ENCODE measurements at regions of chr16 and their contacts with region 1.

Region 1: DNA sequence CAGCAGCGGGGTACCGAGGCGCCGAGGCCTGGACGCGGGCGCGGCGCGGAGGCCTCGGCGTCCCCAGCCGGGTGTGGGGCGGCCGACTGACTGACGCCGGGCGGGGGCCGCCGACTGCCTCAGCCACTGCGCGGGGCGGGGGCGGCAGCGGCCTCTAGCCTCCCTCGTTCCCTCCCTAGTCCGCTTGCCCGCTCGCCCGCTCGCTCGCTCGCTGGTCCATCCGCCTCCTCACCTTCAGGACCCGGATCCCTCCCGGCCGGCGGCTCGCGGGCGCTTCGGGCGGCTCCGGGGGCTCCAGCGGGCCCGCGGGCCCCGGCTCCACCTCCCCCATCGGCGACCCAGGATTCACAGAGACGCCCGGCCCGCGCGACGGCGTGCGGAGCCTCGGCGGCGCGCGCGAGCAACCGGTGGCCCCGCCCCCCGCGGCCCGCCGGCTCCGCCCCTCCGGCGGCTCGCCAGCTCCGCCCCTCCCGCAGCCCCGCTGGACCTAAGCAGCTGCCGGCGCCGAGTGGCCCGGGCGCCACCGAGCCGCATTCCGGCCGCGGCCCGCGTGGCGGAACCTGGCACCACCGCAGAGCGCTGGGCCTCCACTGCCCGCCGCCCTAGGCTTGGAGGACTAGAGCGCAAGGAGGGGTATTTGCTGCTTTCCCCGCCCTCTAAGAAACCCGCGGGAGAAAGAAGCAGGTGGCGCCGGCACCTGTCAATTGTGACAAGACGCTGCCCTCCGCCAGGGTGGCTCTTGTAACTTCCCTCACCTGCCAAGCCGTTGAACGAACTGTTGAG is 773 bp downstream of the PHLPP2 start:
- DNase-seq: peak; percentile 71
- H3K4me3 Mint-ChIP-seq: peak overlapping the region; percentile 81
- H3K27ac Mint-ChIP-seq: no peak overlapping the region
- H3K4me1 Mint-ChIP-seq: peaks cover 12% of the 10 kb centered on the region
- H3K27me3 Mint-ChIP-seq: peaks cover 9% of the 10 kb centered on the region

Region 2: DNA sequence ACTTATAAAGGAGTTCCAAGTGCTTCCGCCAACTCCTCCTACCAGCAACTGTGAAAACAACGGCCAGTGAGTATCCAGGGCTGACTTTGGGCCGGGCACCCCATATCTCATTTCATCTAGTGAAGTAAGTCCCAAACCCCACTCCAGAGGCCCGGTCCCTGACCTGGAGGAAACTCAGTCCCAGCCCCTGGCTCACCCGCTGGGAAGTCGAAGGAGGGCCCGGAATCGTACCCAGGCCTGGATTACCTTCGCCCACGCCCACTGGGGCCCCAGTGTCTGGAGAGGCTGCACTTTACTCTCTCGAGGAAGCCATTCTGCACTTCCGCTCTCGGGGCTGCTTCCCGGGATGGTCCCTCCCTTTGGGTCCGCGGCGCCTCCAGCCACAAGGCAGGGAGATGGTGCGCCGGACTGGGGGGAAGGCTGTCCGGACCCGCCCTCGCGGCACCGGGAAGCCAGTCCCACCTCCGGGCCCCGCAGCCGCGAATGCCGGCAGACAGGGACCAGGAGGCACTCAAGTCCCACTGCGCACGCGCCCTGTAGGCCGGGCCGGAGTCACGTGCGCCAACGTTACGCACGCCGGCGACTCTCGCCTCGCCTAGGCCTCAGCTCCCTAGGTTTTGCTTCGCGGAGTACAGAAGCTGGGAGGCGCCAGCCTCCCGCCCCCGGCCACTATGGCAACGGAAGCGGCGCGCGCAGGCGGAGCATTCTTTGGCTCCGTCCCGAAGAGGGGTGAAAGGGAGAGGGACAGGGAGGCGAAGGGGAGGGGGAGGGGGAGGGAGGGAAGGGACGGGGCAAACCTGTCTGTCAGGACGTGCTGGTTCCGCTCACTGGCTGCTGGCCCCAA is 434.6 kb before region 1 on chr16 and contains the start of gene CMTR2:
- intact Hi-C with region 1: no loop called
- DNase-seq: peak; percentile 88
- H3K4me3 Mint-ChIP-seq: peak within 1 kb of the TSS; percentile 88
- H3K27ac Mint-ChIP-seq: peak within 1 kb of the TSS; percentile 84
- H3K4me1 Mint-ChIP-seq: peaks cover 19% of the 10 kb centered on the region
- H3K27me3 Mint-ChIP-seq: peaks cover 13% of the 10 kb centered on the region
- total RNA-seq, gene CMTR2: 17.1 and 19.6 TPM in 2 replicates

Region 3: GRCh38 chr16:71564155-71564967 is 159.4 kb before region 1 on chr16:
- intact Hi-C with region 1: loop called (anchors 1 kb)
- DNase-seq: no peak
- H3K4me3 Mint-ChIP-seq: peak overlapping the region; percentile 89
- H3K27ac Mint-ChIP-seq: peak overlapping the region; percentile 90
- H3K4me1 Mint-ChIP-seq: peaks cover 11% of the 10 kb centered on the region
- H3K27me3 Mint-ChIP-seq: peaks cover 3% of the 10 kb centered on the region

Region 4: GRCh38 chr16:71585318-71585703 is 138.4 kb before region 1 on chr16:
- intact Hi-C with region 1: no loop called
- DNase-seq: no peak
- H3K4me3 Mint-ChIP-seq: no peak overlapping the region
- H3K27ac Mint-ChIP-seq: no peak overlapping the region
- H3K4me1 Mint-ChIP-seq: no peaks in the 10 kb centered on the region
- H3K27me3 Mint-ChIP-seq: peaks cover 11% of the 10 kb centered on the region

Region 5: DNA sequence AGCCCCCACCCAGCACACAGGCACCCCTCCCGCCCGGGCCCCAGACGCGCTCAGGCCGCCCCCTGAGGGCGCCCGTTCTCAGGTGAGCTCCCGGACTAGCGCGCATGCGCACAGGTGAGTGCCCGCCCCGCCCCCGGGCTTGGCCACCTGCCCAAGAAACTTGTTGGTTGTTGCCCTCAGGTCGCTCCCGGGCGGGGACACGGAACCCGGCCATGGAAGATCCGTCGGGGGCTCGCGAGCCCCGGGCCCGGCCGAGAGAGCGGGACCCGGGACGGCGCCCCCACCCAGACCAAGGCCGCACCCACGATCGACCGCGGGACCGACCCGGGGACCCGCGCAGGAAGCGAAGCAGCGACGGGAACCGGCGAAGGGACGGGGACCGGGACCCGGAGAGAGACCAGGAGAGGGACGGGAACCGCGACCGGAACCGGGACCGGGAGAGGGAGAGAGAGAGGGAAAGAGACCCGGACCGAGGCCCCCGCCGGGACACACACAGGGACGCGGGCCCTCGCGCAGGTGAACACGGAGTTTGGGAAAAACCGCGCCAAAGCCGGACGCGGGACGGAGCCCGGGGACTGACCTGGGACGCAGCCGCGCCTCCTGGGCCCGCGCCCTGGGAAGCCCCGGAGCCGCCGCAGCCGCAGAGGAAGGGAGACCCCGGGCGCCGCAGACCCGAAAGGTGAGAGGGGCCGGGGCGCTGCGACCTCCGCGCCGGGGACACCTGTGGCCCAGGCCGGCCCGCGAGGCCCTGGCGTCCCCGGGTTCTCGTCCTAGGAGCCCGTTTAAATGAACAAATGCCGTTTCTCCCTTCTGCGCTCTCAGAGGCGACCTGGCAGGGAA is 97.5 kb before region 1 on chr16 and contains the start of gene MARVELD3:
- intact Hi-C with region 1: no loop called
- DNase-seq: no peak
- H3K4me3 Mint-ChIP-seq: peak within 1 kb of the TSS; percentile 23
- H3K27ac Mint-ChIP-seq: no peak within 1 kb of the TSS
- H3K4me1 Mint-ChIP-seq: peaks cover 6% of the 10 kb centered on the region
- H3K27me3 Mint-ChIP-seq: peaks cover 17% of the 10 kb centered on the region
- total RNA-seq, gene MARVELD3: not detected in 2 replicates

Region 6: DNA sequence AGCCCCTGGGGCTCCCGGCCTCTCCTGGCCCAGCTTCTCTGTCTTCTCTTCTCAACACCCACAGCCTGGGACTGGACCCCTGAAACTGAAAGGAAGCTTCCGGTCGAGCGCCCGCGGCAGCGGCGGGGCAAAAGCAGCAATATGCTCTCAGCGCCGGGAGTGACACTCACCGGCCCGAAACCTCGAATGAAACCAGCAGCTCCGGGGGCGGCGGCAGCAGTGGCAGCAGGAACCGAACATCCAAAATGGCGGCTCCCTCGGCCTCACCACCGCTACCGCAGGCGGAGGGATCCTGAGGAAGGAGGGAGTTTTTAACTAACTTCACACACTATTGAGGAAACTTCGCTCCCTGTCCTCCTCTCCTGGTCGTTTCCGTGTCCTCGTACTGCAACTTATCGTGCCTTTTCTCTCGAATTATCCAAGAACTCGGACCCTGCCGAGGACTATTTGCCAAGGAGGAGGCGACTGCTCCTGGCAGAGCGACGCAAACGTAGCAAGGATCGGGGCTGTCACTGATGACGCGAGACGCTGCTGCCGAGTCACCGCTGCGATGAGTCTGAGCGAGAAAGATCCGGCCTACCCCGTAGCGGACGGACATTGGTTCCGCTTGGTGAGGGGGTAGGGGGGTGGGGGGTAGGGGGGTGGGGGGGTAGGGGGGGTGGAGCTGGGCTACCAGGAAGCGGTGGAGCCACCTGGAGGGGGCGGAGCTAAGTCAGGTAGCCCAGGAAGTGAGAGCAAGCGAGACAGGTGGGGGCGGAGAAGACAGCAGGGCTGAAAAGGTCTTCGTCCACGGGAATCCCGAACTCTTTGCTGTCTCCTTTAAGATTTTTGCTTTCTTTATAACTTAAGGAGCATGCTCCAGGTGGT is 85.1 kb after region 1 on chr16 and contains the start of gene AP1G1:
- intact Hi-C with region 1: loop called (anchors 1 kb)
- DNase-seq: peak; percentile 91
- H3K4me3 Mint-ChIP-seq: peak within 1 kb of the TSS; percentile 95
- H3K27ac Mint-ChIP-seq: peak within 1 kb of the TSS; percentile 100
- H3K4me1 Mint-ChIP-seq: peaks cover 16% of the 10 kb centered on the region
- H3K27me3 Mint-ChIP-seq: no peaks in the 10 kb centered on the region
- total RNA-seq, gene AP1G1: 90.6 and 91.6 TPM in 2 replicates

Region 7: DNA sequence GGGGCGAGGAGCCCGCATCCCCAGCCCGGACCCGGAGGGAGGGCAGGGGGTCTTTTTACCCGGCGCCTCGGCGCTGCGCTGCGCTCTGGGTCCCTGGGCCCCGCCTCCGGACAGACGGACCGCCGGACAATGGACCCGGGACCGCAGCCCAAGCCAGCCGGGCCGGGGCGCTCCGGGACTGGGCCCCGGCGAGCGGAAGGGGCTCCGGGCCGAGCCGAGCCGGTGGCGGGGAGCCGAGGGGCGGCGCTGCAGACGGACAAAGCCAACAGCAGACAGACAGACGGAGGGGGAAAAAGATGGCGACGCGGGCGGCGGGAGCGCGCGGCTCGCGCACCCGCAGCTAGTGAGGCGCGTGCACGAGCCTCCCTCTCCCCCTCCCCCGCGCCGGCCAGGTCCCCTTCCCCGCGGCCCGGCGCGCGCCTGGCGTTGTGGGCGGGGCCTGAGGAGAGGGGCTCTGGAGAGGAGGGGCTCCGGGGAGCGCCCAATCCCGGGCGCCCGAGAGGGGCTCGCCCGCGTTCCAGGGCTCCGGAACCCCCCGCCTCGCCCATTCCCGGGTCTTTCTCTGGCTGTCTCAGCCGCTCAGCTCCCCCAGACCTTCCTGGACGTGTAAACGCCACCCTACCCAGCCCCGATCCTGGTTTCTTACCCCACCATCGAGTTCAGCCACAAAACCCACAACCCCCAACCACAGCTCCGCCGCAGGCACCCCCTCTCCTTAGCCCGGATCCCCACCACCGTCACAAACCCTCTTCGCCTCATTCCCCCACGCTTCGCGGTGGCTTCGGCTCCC is 160.3 kb after region 1 on chr16 and contains the start of gene ZNF821:
- intact Hi-C with region 1: loop called (anchors 5 kb)
- DNase-seq: peak; percentile 68
- H3K4me3 Mint-ChIP-seq: peak within 1 kb of the TSS; percentile 96
- H3K27ac Mint-ChIP-seq: peak within 1 kb of the TSS; percentile 95
- H3K4me1 Mint-ChIP-seq: peaks cover 45% of the 10 kb centered on the region
- H3K27me3 Mint-ChIP-seq: peaks cover 9% of the 10 kb centered on the region
- total RNA-seq, gene ZNF821: 7.9 and 9.2 TPM in 2 replicates

Region 8: GRCh38 chr16:71894921-71895678 is 171.4 kb after region 1 on chr16 and contains the start of gene IST1:
- intact Hi-C with region 1: loop called (anchors 2 kb)
- DNase-seq: peak; percentile 97
- H3K4me3 Mint-ChIP-seq: peak within 1 kb of the TSS; percentile 95
- H3K27ac Mint-ChIP-seq: peak within 1 kb of the TSS; percentile 98
- H3K4me1 Mint-ChIP-seq: peaks cover 13% of the 10 kb centered on the region
- H3K27me3 Mint-ChIP-seq: no peaks in the 10 kb centered on the region
- total RNA-seq, gene IST1: 158 and 167 TPM in 2 replicates

Region 9: GRCh38 chr16:71961066-71962039 is 237.6 kb after region 1 on chr16:
- intact Hi-C with region 1: loop called (anchors 10 kb)
- DNase-seq: peak; percentile 67
- H3K4me3 Mint-ChIP-seq: no peak overlapping the region
- H3K27ac Mint-ChIP-seq: no peak overlapping the region
- H3K4me1 Mint-ChIP-seq: peaks cover 18% of the 10 kb centered on the region
- H3K27me3 Mint-ChIP-seq: peaks cover 4% of the 10 kb centered on the region

Region 10: GRCh38 chr16:72008424-72009216 is 284.9 kb after region 1 on chr16 and contains the start of gene DHODH:
- intact Hi-C with region 1: loop called (anchors 1 kb)
- DNase-seq: peak; percentile 98
- H3K4me3 Mint-ChIP-seq: peak within 1 kb of the TSS; percentile 95
- H3K27ac Mint-ChIP-seq: peak within 1 kb of the TSS; percentile 90
- H3K4me1 Mint-ChIP-seq: peaks cover 17% of the 10 kb centered on the region
- H3K27me3 Mint-ChIP-seq: no peaks in the 10 kb centered on the region
- total RNA-seq, gene DHODH: 26.7 and 27.1 TPM in 2 replicates